ENCODE measurements at regions of chr21 and their contacts with region 1.

Region 1: GRCh38 chr21:34986561-34987500 is 62.3 kb downstream of the RUNX1 start:
- DNase-seq: peak; percentile 92
- H3K4me3 Mint-ChIP-seq: peak overlapping the region; percentile 67
- H3K27ac Mint-ChIP-seq: peak overlapping the region; percentile 90
- H3K4me1 Mint-ChIP-seq: peaks cover 95% of the 10 kb centered on the region
- H3K27me3 Mint-ChIP-seq: no peaks in the 10 kb centered on the region

Region 2: GRCh38 chr21:34933609-34934335 is 53.1 kb before region 1 on chr21:
- CTCF ChIA-PET with region 1: interaction called, 4 read pairs
- POLR2A ChIA-PET with region 1: interaction called, 16 read pairs
- intact Hi-C with region 1: loop called (anchors 2 kb)
- DNase-seq: peak; percentile 43
- H3K4me3 Mint-ChIP-seq: peak overlapping the region; percentile 77
- H3K27ac Mint-ChIP-seq: peak overlapping the region; percentile 97
- H3K4me1 Mint-ChIP-seq: peaks cover 83% of the 10 kb centered on the region
- H3K27me3 Mint-ChIP-seq: no peaks in the 10 kb centered on the region

Region 3: GRCh38 chr21:34967509-34968289 is 19.1 kb before region 1 on chr21:
- CTCF ChIA-PET with region 1: interaction called, 13 read pairs
- POLR2A ChIA-PET with region 1: interaction called, 52 read pairs
- intact Hi-C with region 1: loop called (anchors 1 kb)
- DNase-seq: peak; percentile 75
- H3K4me3 Mint-ChIP-seq: peak overlapping the region; percentile 55
- H3K27ac Mint-ChIP-seq: peak overlapping the region; percentile 95
- H3K4me1 Mint-ChIP-seq: peaks cover 88% of the 10 kb centered on the region
- H3K27me3 Mint-ChIP-seq: no peaks in the 10 kb centered on the region

Region 4: DNA sequence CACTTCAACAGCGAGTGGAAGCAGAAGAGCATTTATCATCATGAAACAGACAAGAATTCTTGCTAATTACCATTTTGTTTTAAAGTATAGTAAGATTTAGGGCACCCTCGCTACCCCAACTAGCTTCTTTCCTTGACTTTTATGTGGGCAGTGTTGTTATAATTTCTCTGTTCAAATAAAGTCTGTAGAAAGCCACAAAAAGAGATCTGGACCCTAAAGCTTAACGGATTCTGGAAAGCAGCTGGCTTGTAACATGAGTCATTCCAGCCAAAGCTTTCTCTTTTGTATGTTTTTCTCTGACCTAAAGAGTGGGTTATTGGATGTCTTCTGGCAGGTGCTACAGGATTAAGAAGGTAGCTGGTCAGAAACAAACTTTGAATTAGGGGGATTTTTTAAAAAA is 24.9 kb after region 1 on chr21:
- CTCF ChIA-PET with region 1: interaction called, 3 read pairs
- POLR2A ChIA-PET with region 1: interaction called, 14 read pairs
- intact Hi-C with region 1: no loop called
- DNase-seq: no peak
- H3K4me3 Mint-ChIP-seq: peak overlapping the region; percentile 51
- H3K27ac Mint-ChIP-seq: peak overlapping the region; percentile 38
- H3K4me1 Mint-ChIP-seq: peaks cover 77% of the 10 kb centered on the region
- H3K27me3 Mint-ChIP-seq: no peaks in the 10 kb centered on the region

Region 5: DNA sequence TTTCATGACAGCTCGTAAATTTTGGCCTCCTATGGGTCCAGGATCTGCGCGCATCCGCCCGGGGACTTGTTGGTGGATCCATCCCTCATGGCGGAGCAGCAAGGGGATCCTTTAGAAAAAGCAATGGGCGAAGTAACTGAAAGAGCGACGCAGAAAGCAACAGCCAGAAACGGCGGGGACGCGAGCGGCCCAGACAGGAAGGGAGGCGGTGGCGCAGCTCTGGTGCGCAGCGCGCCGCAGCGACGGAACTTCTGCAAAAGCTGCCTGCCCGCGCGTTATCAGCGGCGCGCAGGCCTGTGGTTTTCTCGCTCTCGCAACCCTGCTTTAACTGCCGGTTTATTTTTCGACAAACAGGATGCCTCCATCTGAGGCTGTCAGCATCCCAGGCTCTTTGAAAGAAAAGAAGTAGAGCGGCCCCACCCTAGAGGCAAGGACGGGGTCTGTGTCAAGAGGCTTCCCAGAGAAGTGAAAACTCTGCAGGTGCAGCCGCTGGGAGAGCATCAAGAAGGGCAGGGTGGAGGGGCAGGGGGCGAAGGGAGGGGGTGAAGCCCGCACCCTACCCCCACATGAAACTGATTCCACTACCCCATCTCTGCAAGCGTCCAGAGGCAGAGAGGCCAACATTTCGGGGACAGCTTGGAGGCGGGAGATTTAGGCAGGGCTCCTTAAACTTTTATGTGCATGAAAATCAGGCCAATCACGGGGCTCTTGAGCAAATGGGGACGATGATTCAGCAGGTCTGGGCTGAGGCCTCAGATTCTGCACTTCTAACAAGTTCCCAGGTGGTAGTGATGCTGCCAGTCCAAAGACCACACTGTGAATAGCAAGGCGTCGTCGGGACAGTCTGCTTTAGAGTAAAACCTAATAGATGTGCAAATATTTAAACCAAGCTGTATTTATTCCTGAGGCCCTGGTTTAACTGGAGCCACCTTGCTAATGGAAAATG is 40.1 kb after region 1 on chr21:
- CTCF ChIA-PET with region 1: interaction called, 11 read pairs
- POLR2A ChIA-PET with region 1: interaction called, 28 read pairs
- intact Hi-C with region 1: loop called (anchors 1 kb)
- DNase-seq: peak; percentile 89
- H3K4me3 Mint-ChIP-seq: peak overlapping the region; percentile 75
- H3K27ac Mint-ChIP-seq: peak overlapping the region; percentile 91
- H3K4me1 Mint-ChIP-seq: peaks cover 83% of the 10 kb centered on the region
- H3K27me3 Mint-ChIP-seq: no peaks in the 10 kb centered on the region

Region 6: DNA sequence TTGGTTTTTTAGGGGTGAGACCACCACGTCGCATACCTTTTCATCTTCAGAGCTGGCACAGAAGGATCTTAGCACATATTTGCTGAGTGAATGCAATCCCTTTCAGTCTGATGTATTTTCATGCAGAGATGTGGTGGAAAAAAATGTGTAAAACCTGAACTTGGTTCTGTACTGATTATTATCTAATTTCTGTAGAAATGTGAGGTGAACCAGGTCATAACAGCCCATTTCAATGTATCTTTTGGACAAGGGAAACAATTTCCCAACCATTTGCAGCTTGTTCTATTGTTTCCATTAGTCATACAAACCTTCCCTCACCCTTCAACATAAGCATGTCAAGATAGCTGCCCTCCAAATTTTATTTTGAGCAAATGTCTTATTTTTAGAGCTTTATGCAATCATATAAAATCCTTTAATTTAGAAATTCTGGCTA is 109.0 kb after region 1 on chr21:
- CTCF ChIA-PET with region 1: interaction called, 4 read pairs
- POLR2A ChIA-PET with region 1: interaction called, 10 read pairs
- intact Hi-C with region 1: loop called (anchors 2 kb)
- DNase-seq: peak; percentile 42
- H3K4me3 Mint-ChIP-seq: no peak overlapping the region
- H3K27ac Mint-ChIP-seq: peak overlapping the region; percentile 83
- H3K4me1 Mint-ChIP-seq: peaks cover 48% of the 10 kb centered on the region
- H3K27me3 Mint-ChIP-seq: peaks cover 2% of the 10 kb centered on the region

Region 7: GRCh38 chr21:35106246-35106835 is 119.5 kb after region 1 on chr21:
- CTCF ChIA-PET with region 1: no interaction called
- POLR2A ChIA-PET with region 1: no interaction called
- intact Hi-C with region 1: no loop called
- DNase-seq: no peak
- H3K4me3 Mint-ChIP-seq: no peak overlapping the region
- H3K27ac Mint-ChIP-seq: no peak overlapping the region
- H3K4me1 Mint-ChIP-seq: no peaks in the 10 kb centered on the region
- H3K27me3 Mint-ChIP-seq: no peaks in the 10 kb centered on the region

Measured in activated CD4-positive, alpha-beta memory T cell treated with anti-CD3 and anti-CD28 coated beads for 36 hours (primary cell).